ENCODE measurements at regions of chr12 and their contacts with region 1.

Region 1: DNA sequence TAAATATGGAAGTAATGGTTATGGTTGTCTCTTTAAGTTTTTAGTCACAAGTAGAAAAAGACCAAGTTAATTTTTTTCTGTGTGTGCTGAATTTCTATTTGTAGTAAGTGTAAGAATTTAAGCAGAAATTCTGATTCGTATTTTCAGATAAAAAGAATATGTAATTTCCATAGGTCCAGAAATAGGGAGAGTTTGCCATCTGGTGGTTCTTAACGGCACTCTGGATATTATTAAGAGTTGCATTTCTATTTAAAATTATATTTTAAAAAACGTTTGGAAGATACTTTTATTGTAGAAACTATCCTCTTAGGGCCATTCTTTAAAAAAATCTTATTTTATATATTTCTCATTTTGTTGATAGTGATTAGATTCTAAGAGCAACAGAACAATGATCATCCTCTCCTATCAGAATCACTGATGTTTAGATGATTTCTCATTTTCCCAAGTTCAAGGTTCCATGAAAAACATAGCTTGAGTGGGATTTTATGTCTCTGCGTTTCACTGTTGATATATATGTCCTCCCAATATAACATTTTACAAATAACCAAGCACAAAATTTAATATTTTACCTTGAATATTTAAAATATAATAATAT is 88.3 kb downstream of the LRRK2 start:
- DNase-seq: no peak
- ATAC-seq: no peak

Region 2: GRCh38 chr12:38625306-38625705 is 1687.8 kb before region 1 on chr12:
- intact Hi-C with region 1: no loop called
- DNase-seq: no peak
- ATAC-seq: no peak

Region 3: GRCh38 chr12:40152783-40153383 is 160.2 kb before region 1 on chr12:
- intact Hi-C with region 1: loop called in 1 of 2 experiments (anchors 5 kb)
- DNase-seq: peak; percentile 43
- ATAC-seq: peak in 1 of 2 donors; percentile 30

Measured in left cardiac atrium (tissue), 4 donors.